ENCODE measurements at regions of chr15 and their contacts with region 1.

Region 1: GRCh38 chr15:75335705-75336355 is at the start of gene COMMD4:
- DNase-seq: peak; percentile 81

Region 2: DNA sequence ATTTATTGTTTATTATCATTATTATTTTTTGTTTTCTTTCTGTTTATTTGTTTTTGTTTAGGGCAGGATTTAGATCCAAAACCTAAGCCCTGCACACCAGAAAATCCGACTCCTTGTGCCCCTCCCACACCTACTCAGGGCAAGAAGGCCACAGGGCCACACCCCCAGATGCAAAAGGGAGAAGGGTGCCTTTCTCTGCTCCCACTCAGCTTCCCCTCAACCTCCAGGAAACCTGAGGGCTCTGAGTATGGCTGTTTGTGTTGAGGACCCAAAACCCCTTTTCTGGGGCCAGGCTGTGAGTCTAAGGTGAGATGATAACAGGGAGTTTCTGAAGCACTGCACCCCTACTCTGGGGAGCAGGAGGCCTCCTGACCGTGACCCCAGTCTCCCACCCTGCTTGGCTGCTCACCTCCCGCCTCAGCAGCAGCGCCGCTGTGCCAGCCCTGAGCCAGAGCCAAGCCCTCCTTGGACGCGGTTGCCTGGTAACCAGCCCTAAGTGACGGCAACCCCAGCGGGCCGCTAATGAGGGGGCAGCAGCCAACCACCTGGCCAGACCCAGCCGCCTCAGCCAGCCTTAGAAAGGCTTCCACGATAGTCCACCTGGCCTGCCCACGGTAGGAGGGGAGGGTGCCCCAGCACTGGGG is 140.6 kb before region 1 on chr15:
- CTCF ChIA-PET with region 1: no interaction called
- POLR2A ChIA-PET with region 1: no interaction called
- DNase-seq: no peak

Region 3: DNA sequence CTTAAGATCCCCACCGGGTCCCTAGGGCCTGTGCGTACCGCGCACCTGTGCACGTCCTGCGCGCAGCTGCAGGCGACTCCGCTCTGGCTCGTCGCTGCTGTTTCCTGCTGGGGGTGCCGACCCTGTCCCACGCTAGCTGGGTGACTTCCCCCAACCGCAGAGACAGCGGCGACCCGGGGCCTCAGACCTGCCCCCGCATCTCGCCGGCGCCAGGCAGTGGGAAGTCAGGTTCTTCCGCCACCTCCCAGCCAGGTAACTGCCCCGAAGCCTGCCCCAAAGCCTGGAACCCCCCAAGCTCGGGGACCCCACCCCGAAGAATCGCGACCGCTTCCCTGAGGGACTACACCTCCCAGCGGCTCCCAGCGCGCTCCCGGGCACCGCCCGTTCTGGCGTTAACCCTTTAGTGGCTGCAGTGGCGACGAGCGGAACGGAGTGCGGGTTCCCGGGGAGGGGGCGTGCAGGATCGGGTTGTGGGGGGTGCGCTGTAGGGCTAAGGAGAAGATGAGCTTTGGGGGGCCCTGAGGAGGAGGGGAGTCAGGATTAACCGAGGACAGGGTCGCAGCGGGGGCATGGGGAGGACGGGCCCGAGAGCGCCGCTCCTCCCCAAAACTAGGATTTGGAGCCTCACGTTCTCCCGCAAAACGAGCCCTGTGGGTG is 11.5 kb after region 1 on chr15:
- CTCF ChIA-PET with region 1: no interaction called
- POLR2A ChIA-PET with region 1: interaction called, 13 read pairs
- DNase-seq: peak; percentile 74